K562 (cell line): ENCODE measurements at regions of chr3 and their contacts with region 1.

Region 1: GRCh38 chr3:128438488-128439072 is 28.1 kb downstream of the DNAJB8 start:
- DNase-seq: peak; percentile 34 to 54 (median 46)
- ATAC-seq: peak; percentile 93
- H3K4me3 ChIP-seq: no peak overlapping the region
- H3K27ac ChIP-seq: no peak overlapping the region
- H3K4me1 ChIP-seq: peaks cover 4 to 12% of the 10 kb centered on the region in 2 experiments; a peak in 2 of 5 replicates
- H3K27me3 ChIP-seq: peaks cover 2 to 16% of the 10 kb centered on the region in 2 experiments; a peak in 3 of 5 replicates
- CTCF ChIP-seq: peak; percentile 65 to 81 (median 68)
- EP300 ChIP-seq: no peak
- POLR2A ChIP-seq: no peak
- RAD21 ChIP-seq: peak; percentile 30 to 58; a peak in 3 of 4 replicates

Region 2: GRCh38 chr3:128170805-128171516 is 267.6 kb before region 1 on chr3:
- CTCF ChIA-PET with region 1: no interaction called
- POLR2A ChIA-PET with region 1: no interaction called
- in situ Hi-C with region 1: no loop called
- intact Hi-C with region 1: loop called (anchors 10 kb)
- DNase-seq: peak; percentile 61 to 78 (median 68)
- ATAC-seq: peak; percentile 99
- H3K4me3 ChIP-seq: no peak overlapping the region
- H3K27ac ChIP-seq: no peak overlapping the region
- H3K4me1 ChIP-seq: peaks cover 0 to 4% of the 10 kb centered on the region in 2 experiments; a peak in 2 of 5 replicates
- H3K27me3 ChIP-seq: no peaks in the 10 kb centered on the region
- CTCF ChIP-seq: peak; percentile 83 to 99 (median 98)
- EP300 ChIP-seq: no peak
- POLR2A ChIP-seq: no peak
- RAD21 ChIP-seq: peak; percentile 73 to 85

Region 3: GRCh38 chr3:128226795-128227395 is 211.7 kb before region 1 on chr3:
- CTCF ChIA-PET with region 1: no interaction called
- POLR2A ChIA-PET with region 1: no interaction called
- in situ Hi-C with region 1: no loop called
- intact Hi-C with region 1: loop called (anchors 5 kb)
- DNase-seq: peak; percentile 67 to 82 (median 79)
- ATAC-seq: peak; percentile 99
- H3K4me3 ChIP-seq: no peak overlapping the region
- H3K27ac ChIP-seq: no peak overlapping the region
- H3K4me1 ChIP-seq: 0 out of 5 replicates have a peak, but pooled peaks cover 0 to 3% of the 10 kb centered on the region in 2 experiments
- H3K27me3 ChIP-seq: no peaks in the 10 kb centered on the region
- CTCF ChIP-seq: peak; percentile 74 to 97 (median 87)
- EP300 ChIP-seq: no peak
- POLR2A ChIP-seq: no peak
- RAD21 ChIP-seq: peak; percentile 66 to 83

Region 4: DNA sequence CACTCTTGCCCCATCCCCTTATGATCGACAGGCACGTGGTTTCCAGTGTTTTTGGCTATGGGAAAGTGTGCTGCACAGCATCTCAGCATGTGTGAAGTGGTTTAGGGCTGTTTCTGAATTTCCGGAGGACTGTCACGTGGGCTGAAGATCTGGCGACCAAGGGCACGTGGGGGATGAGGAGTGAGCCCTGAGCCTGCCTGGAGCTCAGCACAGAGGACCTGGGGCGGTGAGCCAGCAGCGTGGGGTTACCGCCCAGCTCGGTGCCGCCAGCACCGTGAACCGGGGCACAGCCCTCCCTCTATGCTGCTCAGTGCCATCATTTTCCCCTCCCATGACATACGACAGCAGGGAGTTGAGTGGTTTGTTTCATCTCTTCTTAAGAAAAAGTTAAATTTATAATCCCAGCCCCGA is 122.1 kb before region 1 on chr3:
- CTCF ChIA-PET with region 1: no interaction called
- POLR2A ChIA-PET with region 1: no interaction called
- in situ Hi-C with region 1: no loop called
- intact Hi-C with region 1: no loop called
- DNase-seq: no peak
- ATAC-seq: no peak
- H3K4me3 ChIP-seq: no peak overlapping the region
- H3K27ac ChIP-seq: no peak overlapping the region
- H3K4me1 ChIP-seq: peaks cover 0 to 3% of the 10 kb centered on the region in 2 experiments; a peak in 2 of 5 replicates
- H3K27me3 ChIP-seq: no peaks in the 10 kb centered on the region
- CTCF ChIP-seq: no peak
- EP300 ChIP-seq: no peak
- POLR2A ChIP-seq: no peak
- RAD21 ChIP-seq: no peak

Region 5: DNA sequence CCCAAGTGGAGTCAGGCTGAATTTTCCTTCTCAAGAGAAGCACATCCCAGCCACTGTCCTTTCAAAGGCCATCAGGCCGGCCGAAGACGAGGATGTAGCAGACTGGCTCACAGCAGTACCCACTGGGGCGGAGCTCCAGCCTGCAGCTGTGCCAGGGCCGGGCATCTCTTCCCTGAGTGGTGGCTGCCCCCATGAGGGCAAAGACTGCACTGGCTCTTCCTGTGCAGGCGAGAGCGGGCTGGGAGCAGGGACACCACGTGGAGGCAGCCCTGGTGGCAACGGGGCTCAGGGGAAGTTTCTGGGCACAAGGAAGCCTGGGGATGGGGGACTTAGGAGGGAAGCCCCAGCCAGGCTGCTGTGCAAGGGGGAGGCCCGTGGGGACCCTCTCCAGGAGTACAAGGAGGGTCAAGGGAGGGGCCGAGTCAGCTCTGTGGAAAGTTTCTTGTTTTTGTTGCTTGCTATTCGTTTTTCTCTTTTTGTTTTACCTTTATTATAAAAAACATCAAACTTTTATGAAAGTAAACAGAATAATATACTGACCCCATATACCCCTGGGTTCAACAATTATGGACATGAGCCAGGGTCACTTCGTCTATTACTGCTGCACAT is 145.9 kb after region 1 on chr3:
- CTCF ChIA-PET with region 1: no interaction called
- POLR2A ChIA-PET with region 1: no interaction called
- in situ Hi-C with region 1: no loop called
- intact Hi-C with region 1: loop called (anchors 10 kb)
- DNase-seq: peak; percentile 27 to 66 (median 36)
- ATAC-seq: peak; percentile 92
- H3K4me3 ChIP-seq: no peak overlapping the region
- H3K27ac ChIP-seq: peak overlapping the region; percentile 71; the same call in 2 of the 3 replicates
- H3K4me1 ChIP-seq: peaks cover 14 to 23% of the 10 kb centered on the region in 2 experiments
- H3K27me3 ChIP-seq: no peaks in the 10 kb centered on the region
- CTCF ChIP-seq: peak; percentile 66 to 67 (median 66)
- EP300 ChIP-seq: no peak
- POLR2A ChIP-seq: no peak
- RAD21 ChIP-seq: peak; percentile 64 to 77